ENCODE measurements at regions of chr2 and their contacts with region 1.

Region 1: DNA sequence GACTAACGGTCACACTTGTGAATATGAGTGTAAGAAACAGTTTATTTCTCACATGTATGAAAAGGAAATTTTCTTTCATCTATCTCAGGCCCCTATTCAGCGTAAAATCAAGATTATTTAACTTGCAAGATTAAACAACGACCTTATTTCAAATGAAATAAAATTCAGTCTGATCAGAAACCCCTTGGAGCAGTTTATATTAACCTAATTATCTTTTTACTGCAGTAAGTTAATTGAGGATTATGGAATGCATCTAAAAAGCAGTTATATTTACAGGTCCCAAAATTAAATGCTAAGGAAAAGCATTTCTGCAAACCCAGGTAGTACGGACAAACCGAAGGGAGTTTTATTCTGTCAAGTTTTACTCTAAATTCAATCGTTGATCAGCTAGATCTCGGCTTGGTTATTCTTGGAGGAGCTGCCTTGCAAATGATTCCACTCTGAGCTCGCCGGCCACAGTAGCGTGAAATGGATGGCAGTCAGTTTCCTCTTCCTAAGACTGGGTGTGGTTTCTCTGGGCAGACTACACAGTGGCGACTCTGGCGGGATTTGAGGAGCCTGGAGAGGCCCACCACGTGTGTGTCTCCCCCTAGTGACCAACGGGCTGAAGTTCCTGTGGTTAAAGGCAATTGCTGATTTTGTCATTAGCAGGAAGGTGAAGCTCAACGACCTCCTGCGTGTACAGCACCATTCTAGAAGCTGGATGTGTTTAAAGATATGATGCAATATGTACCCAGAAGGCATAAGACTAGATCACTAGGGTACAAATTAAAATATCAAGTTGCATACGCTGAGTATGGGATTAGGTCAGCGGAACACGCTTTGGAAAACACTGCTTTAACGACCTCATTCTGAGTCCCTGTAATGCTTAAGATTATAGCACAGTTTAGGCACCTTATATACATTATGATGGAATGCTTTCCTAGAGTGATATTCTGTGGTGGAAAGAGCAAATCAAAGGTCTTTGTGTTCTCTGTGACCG is 36.4 kb downstream of the PRKRA start:
- DNase-seq: peak; percentile 91
- H3K4me3 Mint-ChIP-seq: peak overlapping the region; percentile 97
- H3K27ac Mint-ChIP-seq: no peak overlapping the region
- H3K4me1 Mint-ChIP-seq: no peaks in the 10 kb centered on the region
- H3K27me3 Mint-ChIP-seq: no peaks in the 10 kb centered on the region
- CTCF ChIP-seq: peak; percentile 89

Region 2: GRCh38 chr2:177906041-177906718 is 508.4 kb before region 1 on chr2:
- CTCF ChIA-PET with region 1: no interaction called
- intact Hi-C with region 1: loop called (anchors 10 kb)
- DNase-seq: peak; percentile 85
- H3K4me3 Mint-ChIP-seq: no peak overlapping the region
- H3K27ac Mint-ChIP-seq: no peak overlapping the region
- H3K4me1 Mint-ChIP-seq: peaks cover 24% of the 10 kb centered on the region
- H3K27me3 Mint-ChIP-seq: no peaks in the 10 kb centered on the region
- CTCF ChIP-seq: peak; percentile 84

Region 3: GRCh38 chr2:178112202-178113152 is 302.1 kb before region 1 on chr2 and contains the start of gene RBM45:
- CTCF ChIA-PET with region 1: interaction called, 9 read pairs
- intact Hi-C with region 1: loop called (anchors 1 kb)
- DNase-seq: peak; percentile 93
- H3K4me3 Mint-ChIP-seq: peak within 1 kb of the TSS; percentile 97
- H3K27ac Mint-ChIP-seq: peak within 1 kb of the TSS; percentile 83
- H3K4me1 Mint-ChIP-seq: peaks cover 7% of the 10 kb centered on the region
- H3K27me3 Mint-ChIP-seq: no peaks in the 10 kb centered on the region
- CTCF ChIP-seq: peak; percentile 95
- total RNA-seq, gene RBM45: 11.5 and 11.6 TPM in 2 replicates

Region 4: GRCh38 chr2:178208817-178209216 is 205.7 kb before region 1 on chr2:
- CTCF ChIA-PET with region 1: no interaction called
- intact Hi-C with region 1: loop called (anchors 5 kb)
- DNase-seq: no peak
- H3K4me3 Mint-ChIP-seq: no peak overlapping the region
- H3K27ac Mint-ChIP-seq: no peak overlapping the region
- H3K4me1 Mint-ChIP-seq: no peaks in the 10 kb centered on the region
- H3K27me3 Mint-ChIP-seq: no peaks in the 10 kb centered on the region
- CTCF ChIP-seq: peak; percentile 18

Region 5: GRCh38 chr2:178397002-178397605 is 17.5 kb before region 1 on chr2:
- CTCF ChIA-PET with region 1: interaction called, 4 read pairs
- intact Hi-C with region 1: loop called (anchors 2 kb)
- DNase-seq: peak; percentile 11
- H3K4me3 Mint-ChIP-seq: no peak overlapping the region
- H3K27ac Mint-ChIP-seq: no peak overlapping the region
- H3K4me1 Mint-ChIP-seq: no peaks in the 10 kb centered on the region
- H3K27me3 Mint-ChIP-seq: no peaks in the 10 kb centered on the region
- CTCF ChIP-seq: peak; percentile 34

Measured in Calu3 (cell line).